ENCODE measurements at regions of chr7 and their contacts with region 1.

Region 1: GRCh38 chr7:27210441-27211083 is 10.7 kb upstream of the HOXA13 start:
- ATAC-seq: peak in 7 of 8 experiments; percentile 39 to 57 (median 44)
- H3K4me3 ChIP-seq: no peak overlapping the region
- H3K27ac ChIP-seq: no peak overlapping the region
- H3K4me1 ChIP-seq: no peaks in the 10 kb centered on the region

Region 2: DNA sequence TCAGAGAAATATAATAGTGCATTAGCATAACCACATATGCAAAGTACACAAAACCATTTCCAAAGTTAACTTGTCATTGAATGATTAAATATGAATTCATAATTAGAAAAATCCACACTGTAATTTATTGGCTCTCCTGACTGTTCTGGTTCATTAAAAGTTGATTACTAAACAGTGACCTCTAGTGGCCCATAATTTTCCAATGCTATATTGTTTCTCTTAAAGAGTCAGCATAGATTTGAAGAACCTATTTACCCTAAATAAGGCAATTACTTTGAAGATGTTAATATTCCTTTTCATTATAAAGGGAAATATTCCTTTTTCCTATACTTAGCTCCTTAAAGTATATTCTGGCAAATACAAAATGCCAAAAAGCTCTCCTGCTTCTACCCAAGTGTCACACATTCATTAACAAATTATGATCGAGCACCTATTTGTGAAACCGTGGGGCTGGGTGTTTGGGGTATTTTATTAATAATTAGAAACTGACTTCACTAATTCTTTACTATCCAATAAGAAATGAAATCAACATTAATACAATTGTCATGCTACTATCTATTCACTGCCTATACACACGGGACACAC is 365.9 kb after region 1 on chr7:
- in situ Hi-C with region 1: loop called in 3 of 9 experiments (anchors 10 to 25 kb)
- ATAC-seq: peak in 3 of 8 experiments; percentile 65 to 78 (median 65)
- H3K4me3 ChIP-seq: no peak overlapping the region
- H3K27ac ChIP-seq: no peak overlapping the region
- H3K4me1 ChIP-seq: peaks cover 5 to 8% of the 10 kb centered on the region in 2 donors

Region 3: GRCh38 chr7:27670676-27671075 is 460.1 kb after region 1 on chr7:
- in situ Hi-C with region 1: no loop called
- ATAC-seq: no peak
- H3K4me3 ChIP-seq: no peak overlapping the region
- H3K27ac ChIP-seq: no peak overlapping the region
- H3K4me1 ChIP-seq: no peaks in the 10 kb centered on the region

Region 4: GRCh38 chr7:27784393-27785053 is 574.0 kb after region 1 on chr7:
- in situ Hi-C with region 1: loop called in 1 of 9 experiments (anchors 25 kb)
- ATAC-seq: peak in 3 of 8 experiments; percentile 43 to 98 (median 94)
- H3K4me3 ChIP-seq: no peak overlapping the region
- H3K27ac ChIP-seq: no peak overlapping the region
- H3K4me1 ChIP-seq: no peaks in the 10 kb centered on the region

Region 5: DNA sequence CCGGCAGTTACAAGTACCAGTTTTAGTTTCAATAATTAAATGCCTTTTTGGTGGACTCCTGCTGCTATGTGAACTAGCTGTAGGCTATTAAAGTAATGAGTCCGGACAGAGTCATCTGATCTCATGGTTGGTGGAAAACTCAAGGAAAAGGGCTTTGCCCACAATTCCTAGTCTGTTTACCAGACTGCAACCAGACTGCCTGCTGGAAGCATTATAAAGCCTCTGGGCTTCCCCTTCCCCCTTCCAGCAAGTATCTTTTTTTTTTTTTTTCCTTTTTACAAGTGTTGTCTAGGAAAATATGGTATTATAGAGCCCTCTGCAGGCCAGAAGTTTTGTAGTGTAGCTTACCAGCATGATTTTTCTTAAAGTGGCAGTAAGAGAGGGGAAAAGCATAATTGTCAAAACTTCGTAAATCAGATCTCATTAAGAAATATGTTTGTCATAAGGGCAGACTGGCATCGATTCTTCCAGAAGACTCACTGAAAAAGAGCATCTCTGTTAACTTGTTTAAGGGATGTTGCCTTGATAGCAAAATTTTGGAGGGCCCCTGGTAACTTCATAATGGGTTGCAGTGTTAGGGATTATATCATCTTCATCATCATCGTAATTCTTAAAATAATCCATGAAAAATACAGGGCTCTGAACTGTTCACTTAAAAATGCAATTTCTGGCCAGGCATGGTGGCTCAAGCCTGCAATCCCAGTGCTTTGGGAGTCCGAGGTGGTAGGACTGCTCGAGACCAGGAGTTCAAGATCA is 710.7 kb after region 1 on chr7:
- in situ Hi-C with region 1: loop called in 2 of 9 experiments (anchors 25 kb)
- ATAC-seq: peak; percentile 81 to 98 (median 88)
- H3K4me3 ChIP-seq: no peak overlapping the region
- H3K27ac ChIP-seq: no peak overlapping the region
- H3K4me1 ChIP-seq: peaks cover 0 to 3% of the 10 kb centered on the region in 2 donors

Region 6: DNA sequence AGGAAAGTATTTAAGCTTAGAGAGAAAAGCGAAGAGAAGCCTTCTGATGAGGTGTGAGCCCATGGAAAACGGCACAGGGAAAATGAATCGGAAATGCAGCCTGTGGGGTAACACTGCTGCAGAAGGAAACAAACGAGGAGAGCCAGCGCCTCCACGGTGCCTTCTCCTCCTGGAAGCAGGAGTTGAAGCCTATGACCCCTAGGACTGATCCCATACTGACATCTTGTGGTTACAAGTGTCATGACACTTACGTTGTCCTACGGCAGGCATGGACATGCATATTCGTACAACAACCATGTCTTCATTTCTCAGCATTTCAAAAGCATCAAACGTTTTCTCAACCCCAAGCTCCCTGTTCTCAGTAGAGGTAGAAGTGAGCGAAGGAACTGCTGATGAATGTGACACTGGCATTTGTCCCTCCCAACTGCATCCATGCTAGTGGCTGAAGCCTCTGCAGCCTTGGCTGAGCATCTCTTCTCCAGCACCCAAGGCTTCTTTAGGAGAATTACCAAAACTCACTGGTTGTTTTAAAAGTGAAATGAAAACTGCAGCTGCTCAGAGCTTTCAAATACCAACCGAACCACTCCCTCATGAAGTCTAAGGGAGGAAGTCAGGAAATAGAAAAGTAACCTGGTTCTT is 809.9 kb after region 1 on chr7:
- in situ Hi-C with region 1: loop called in 1 of 9 experiments (anchors 25 kb)
- ATAC-seq: peak; percentile 79 to 99 (median 94)
- H3K4me3 ChIP-seq: no peak overlapping the region
- H3K27ac ChIP-seq: no peak overlapping the region
- H3K4me1 ChIP-seq: peaks cover 0 to 2% of the 10 kb centered on the region in 2 donors

Measured in motor neuron (in vitro differentiated cells).